ENCODE measurements at regions of chr4 and their contacts with region 1.

Region 1: DNA sequence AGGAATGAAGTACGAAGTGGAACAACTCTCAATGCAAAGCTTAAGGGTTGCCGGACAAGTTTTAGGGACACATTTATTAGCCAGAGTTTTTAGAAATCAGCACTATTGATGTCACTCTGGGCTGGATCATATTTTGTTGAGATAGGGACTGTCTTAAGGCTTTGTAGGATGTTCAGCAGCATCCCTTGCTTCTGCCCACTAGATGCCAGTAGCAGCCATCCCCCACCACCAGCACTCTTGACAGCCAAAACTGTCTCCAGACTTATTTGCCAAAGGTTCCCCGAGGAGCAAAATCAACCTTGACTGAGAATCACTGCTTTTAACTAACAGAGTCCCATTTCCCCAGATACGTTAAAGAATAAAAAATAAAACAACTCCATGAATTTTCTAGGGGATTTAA is 1497.3 kb downstream of the STIM2 start:
- DNase-seq: peak; percentile 39
- ATAC-seq: peak; percentile 75
- H3K4me3 ChIP-seq: no peak overlapping the region
- H3K27ac ChIP-seq: no peak overlapping the region
- H3K4me1 ChIP-seq: no peaks in the 10 kb centered on the region
- H3K27me3 ChIP-seq: no peaks in the 10 kb centered on the region
- CTCF ChIP-seq: peak; percentile 40
- POLR2A ChIP-seq: no peak
- RAD21 ChIP-seq: peak; percentile 57

Region 2: GRCh38 chr4:27861381-27862201 is 496.4 kb before region 1 on chr4:
- CTCF ChIA-PET with region 1: no interaction called
- POLR2A ChIA-PET with region 1: no interaction called
- dilution Hi-C with region 1: no loop called
- in situ Hi-C with region 1: no loop called
- intact Hi-C with region 1: loop called (anchors 10 kb)
- DNase-seq: peak; percentile 61
- ATAC-seq: peak; percentile 48
- H3K4me3 ChIP-seq: no peak overlapping the region
- H3K27ac ChIP-seq: no peak overlapping the region
- H3K4me1 ChIP-seq: no peaks in the 10 kb centered on the region
- H3K27me3 ChIP-seq: no peaks in the 10 kb centered on the region
- CTCF ChIP-seq: peak; percentile 57
- POLR2A ChIP-seq: no peak
- RAD21 ChIP-seq: peak; percentile 73

Region 3: GRCh38 chr4:28966982-28967381 is 609.0 kb after region 1 on chr4:
- CTCF ChIA-PET with region 1: no interaction called
- POLR2A ChIA-PET with region 1: no interaction called
- dilution Hi-C with region 1: no loop called
- in situ Hi-C with region 1: no loop called
- intact Hi-C with region 1: no loop called
- DNase-seq: peak; percentile 90
- ATAC-seq: peak; percentile 98
- H3K4me3 ChIP-seq: no peak overlapping the region
- H3K27ac ChIP-seq: no peak overlapping the region
- H3K4me1 ChIP-seq: peaks cover 2% of the 10 kb centered on the region; the same call in 1 of the 2 replicates
- H3K27me3 ChIP-seq: no peaks in the 10 kb centered on the region
- CTCF ChIP-seq: no peak
- POLR2A ChIP-seq: no peak
- RAD21 ChIP-seq: no peak